ENCODE measurements at regions of chr10 and their contacts with region 1.

Region 1: DNA sequence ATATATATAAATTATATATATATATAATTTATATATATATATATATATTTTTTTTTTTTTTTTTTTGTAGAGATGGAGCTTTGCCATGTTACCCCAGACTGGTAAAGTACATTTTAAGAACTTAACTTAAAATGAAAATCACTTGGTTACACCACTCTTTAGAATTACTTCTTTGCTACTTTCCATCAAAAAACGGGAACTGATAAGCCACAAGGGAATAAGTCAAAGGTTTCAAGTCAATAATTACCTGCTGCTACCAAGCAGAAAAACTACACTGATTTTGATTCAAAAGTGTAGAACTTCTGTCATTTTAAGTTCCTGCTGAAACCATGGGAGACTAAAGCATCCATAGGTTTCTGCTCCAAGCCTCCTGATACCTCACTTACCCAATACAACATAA is 12.2 kb downstream of the PPA1 start:
- DNase-seq: no peak
- ATAC-seq: no peak
- H3K4me3 ChIP-seq: no peak overlapping the region
- H3K4me3 Mint-ChIP-seq: peak overlapping the region in 1 of 3 donors; percentile 56
- H3K27ac ChIP-seq: peak overlapping the region; percentile 6
- H3K27ac Mint-ChIP-seq: peak overlapping the region; percentile 83 to 85
- H3K4me1 ChIP-seq: peaks cover 3 to 6% of the 10 kb centered on the region in 2 experiments
- H3K4me1 Mint-ChIP-seq: peaks cover 14 to 18% (median 16%) of the 10 kb centered on the region in 3 donors
- H3K27me3 ChIP-seq: no peaks in the 10 kb centered on the region
- H3K27me3 Mint-ChIP-seq: no peaks in the 10 kb centered on the region

Region 2: DNA sequence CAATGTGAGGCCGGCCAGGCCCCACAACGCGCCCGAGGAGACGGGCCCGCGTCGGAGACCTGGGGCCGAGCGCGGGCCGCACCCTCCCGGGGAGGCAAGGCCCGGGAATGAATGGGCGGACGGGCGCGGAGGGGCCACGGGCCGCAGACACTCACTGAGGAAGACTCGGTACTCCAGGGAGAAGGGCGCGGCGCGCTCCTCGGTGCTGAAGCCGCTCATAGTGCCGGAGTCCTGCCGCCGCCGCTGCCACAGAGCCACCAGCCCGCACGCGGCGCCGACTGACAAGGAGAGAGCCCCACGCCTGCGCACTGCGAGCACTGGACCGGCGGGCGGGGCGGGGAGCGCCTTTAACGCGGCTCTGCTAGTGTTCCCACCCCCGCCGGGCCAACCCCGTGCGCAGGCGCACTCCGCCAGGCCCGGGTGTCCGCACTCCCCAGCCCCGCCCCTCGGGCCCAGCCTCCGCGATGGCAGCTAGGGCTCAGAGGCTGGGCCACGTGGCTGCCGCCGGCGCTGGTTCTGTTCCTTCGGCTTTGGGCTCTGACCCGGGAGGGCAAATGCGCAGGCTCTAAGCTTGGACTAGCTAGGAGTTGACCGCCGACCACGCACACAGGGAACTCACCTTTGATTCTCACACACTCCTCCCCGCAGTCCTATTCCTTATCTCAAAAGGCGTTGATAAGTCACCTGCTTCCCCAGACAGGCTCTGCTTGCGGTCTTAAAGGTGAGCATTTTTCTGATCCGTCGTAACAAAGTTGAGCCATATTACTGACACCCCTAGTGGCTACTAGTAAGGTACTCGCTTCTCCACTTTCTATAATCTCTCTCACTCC is 12.3 kb after region 1 on chr10 and contains the start of gene PPA1:
- CTCF ChIA-PET with region 1: interaction called, 4 to 45 read pairs
- POLR2A ChIA-PET with region 1: interaction called, 3 to 4 read pairs
- DNase-seq: peak; percentile 97 to 100 (median 99)
- ATAC-seq: peak; percentile 91 to 98 (median 92)
- H3K4me3 ChIP-seq: peak within 1 kb of the TSS; percentile 88
- H3K4me3 Mint-ChIP-seq: peak within 1 kb of the TSS; percentile 78 to 92 (median 83)
- H3K27ac ChIP-seq: peak within 1 kb of the TSS; percentile 80
- H3K27ac Mint-ChIP-seq: peak within 1 kb of the TSS; percentile 77 to 92
- H3K4me1 ChIP-seq: peaks cover 6 to 18% of the 10 kb centered on the region in 2 experiments
- H3K4me1 Mint-ChIP-seq: peaks cover 19 to 37% (median 30%) of the 10 kb centered on the region in 3 donors
- H3K27me3 ChIP-seq: no peaks in the 10 kb centered on the region
- H3K27me3 Mint-ChIP-seq: no peaks in the 10 kb centered on the region
- total RNA-seq, gene PPA1: 56.7 to 78.4 (median 64.4) TPM

Region 3: GRCh38 chr10:70272925-70273316 is 51.9 kb after region 1 on chr10:
- CTCF ChIA-PET with region 1: interaction called, 7 to 16 read pairs
- POLR2A ChIA-PET with region 1: no interaction called
- DNase-seq: peak in 2 of 35 experiments; percentile 7 to 60
- ATAC-seq: peak; percentile 33 to 68 (median 58)
- H3K4me3 ChIP-seq: no peak overlapping the region
- H3K4me3 Mint-ChIP-seq: no peak overlapping the region
- H3K27ac ChIP-seq: peak overlapping the region; percentile 12
- H3K27ac Mint-ChIP-seq: no peak overlapping the region
- H3K4me1 ChIP-seq: peaks cover 0 to 4% of the 10 kb centered on the region in 2 experiments
- H3K4me1 Mint-ChIP-seq: peaks cover 6 to 11% (median 10%) of the 10 kb centered on the region in 3 donors
- H3K27me3 ChIP-seq: peaks cover 0 to 3% of the 10 kb centered on the region in 2 experiments
- H3K27me3 Mint-ChIP-seq: no peaks in the 10 kb centered on the region

Region 4: GRCh38 chr10:70358446-70358845 is 137.4 kb after region 1 on chr10:
- CTCF ChIA-PET with region 1: interaction called, 39 to 177 read pairs
- POLR2A ChIA-PET with region 1: interaction called, 4 to 11 read pairs
- DNase-seq: no peak
- ATAC-seq: no peak
- H3K4me3 ChIP-seq: no peak overlapping the region
- H3K4me3 Mint-ChIP-seq: no peak overlapping the region
- H3K27ac ChIP-seq: no peak overlapping the region
- H3K27ac Mint-ChIP-seq: no peak overlapping the region
- H3K4me1 ChIP-seq: peaks cover 2 to 21% of the 10 kb centered on the region in 2 experiments
- H3K4me1 Mint-ChIP-seq: peaks cover 7 to 15% (median 7%) of the 10 kb centered on the region in 3 donors
- H3K27me3 ChIP-seq: peaks cover 0 to 4% of the 10 kb centered on the region in 2 experiments
- H3K27me3 Mint-ChIP-seq: peaks cover 0 to 7% of the 10 kb centered on the region in 2 donors

Region 5: GRCh38 chr10:70363971-70364771 is 143.1 kb after region 1 on chr10:
- CTCF ChIA-PET with region 1: interaction called, 39 to 177 read pairs
- POLR2A ChIA-PET with region 1: interaction called, 5 to 11 read pairs
- DNase-seq: peak; percentile 44 to 91 (median 78)
- ATAC-seq: peak; percentile 96 to 100 (median 98)
- H3K4me3 ChIP-seq: no peak overlapping the region
- H3K4me3 Mint-ChIP-seq: peak overlapping the region in 1 of 3 donors; percentile 3
- H3K27ac ChIP-seq: no peak overlapping the region
- H3K27ac Mint-ChIP-seq: peak overlapping the region in 1 of 2 donors; percentile 39
- H3K4me1 ChIP-seq: peaks cover 0 to 14% of the 10 kb centered on the region in 2 experiments
- H3K4me1 Mint-ChIP-seq: peaks cover 9 to 17% (median 12%) of the 10 kb centered on the region in 3 donors
- H3K27me3 ChIP-seq: no peaks in the 10 kb centered on the region
- H3K27me3 Mint-ChIP-seq: no peaks in the 10 kb centered on the region

Region 6: DNA sequence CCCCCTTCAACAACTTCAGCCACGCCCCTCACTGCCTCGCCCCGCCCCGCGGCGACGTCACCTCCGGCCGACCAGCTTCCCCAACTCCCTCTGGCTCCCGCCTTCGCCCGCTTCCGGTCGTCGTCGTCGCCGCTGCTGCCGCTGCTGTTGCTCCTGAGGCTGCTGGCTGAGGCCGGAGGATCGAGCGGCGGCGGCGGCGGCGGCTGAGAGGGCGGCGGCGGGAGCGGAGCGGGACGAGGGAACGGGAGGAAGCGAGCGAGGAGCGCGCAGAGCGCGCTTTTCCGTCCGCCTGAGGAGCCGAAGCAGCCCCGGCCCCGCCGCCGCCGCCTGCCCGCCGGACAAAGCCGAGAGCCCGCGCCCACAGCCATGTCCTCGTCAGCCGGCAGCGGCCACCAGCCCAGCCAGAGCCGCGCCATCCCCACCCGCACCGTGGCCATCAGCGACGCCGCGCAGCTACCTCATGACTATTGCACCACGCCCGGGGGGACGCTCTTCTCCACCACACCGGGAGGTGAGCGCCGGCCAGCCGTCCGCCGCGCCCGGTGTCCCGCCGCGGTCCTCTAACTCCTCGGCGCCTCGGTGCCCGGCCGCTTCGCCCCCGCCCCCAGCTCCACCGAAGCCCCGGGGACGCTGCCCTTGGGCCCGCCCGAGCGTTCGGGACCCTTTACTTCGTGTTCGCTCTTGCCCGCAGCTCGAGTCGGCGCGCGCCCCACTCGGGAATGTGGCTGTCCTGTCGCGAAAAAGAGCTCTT is 183.2 kb after region 1 on chr10 and contains the start of gene EIF4EBP2:
- CTCF ChIA-PET with region 1: interaction called in 1 of 2 experiments, 11 read pairs
- POLR2A ChIA-PET with region 1: interaction called in 1 of 2 experiments, 4 read pairs
- DNase-seq: peak; percentile 89 to 100 (median 97)
- ATAC-seq: peak; percentile 92 to 96 (median 96)
- H3K4me3 ChIP-seq: peak within 1 kb of the TSS; percentile 63 to 69
- H3K4me3 Mint-ChIP-seq: peak within 1 kb of the TSS; percentile 95 to 100 (median 96)
- H3K27ac ChIP-seq: peak within 1 kb of the TSS; percentile 55
- H3K27ac Mint-ChIP-seq: peak within 1 kb of the TSS; percentile 91 to 92
- H3K4me1 ChIP-seq: peaks cover 11 to 30% of the 10 kb centered on the region in 2 experiments
- H3K4me1 Mint-ChIP-seq: peaks cover 41 to 54% (median 50%) of the 10 kb centered on the region in 3 donors
- H3K27me3 ChIP-seq: no peaks in the 10 kb centered on the region
- H3K27me3 Mint-ChIP-seq: no peaks in the 10 kb centered on the region
- total RNA-seq, gene EIF4EBP2: 39.9 to 47.7 (median 42.6) TPM

Region 7: DNA sequence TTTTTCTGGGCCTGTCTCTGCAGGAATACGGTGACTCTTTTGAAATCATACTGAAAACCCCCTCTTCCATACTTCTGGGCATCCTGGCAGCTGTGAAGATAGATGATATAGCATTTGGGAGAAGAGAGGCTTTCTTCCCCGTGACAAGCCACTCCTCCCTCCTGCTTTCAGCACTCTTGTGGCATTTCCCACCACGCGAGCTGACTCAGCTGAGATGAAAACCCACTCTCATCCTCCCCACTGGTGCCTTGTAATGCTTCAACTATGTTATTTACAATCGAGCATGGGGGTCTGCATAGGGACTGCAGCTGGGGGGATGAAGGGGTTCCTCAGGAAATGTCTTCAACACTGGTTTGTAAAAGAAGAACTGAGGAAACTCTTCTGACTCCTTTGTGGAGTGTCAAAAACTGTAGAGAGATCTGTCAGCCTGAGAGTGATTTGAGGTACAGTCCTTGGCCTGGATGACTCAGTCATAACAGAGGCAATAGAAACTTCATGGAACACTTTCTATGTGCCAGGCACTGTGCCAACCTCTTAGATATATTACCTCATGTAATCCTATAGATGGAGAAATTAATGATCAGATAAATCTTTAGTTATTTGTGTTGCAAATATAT is 565.9 kb after region 1 on chr10:
- CTCF ChIA-PET with region 1: no interaction called
- POLR2A ChIA-PET with region 1: no interaction called
- DNase-seq: no peak
- ATAC-seq: no peak
- H3K4me3 ChIP-seq: no peak overlapping the region
- H3K4me3 Mint-ChIP-seq: no peak overlapping the region
- H3K27ac ChIP-seq: no peak overlapping the region
- H3K27ac Mint-ChIP-seq: no peak overlapping the region
- H3K4me1 ChIP-seq: peaks cover 2 to 10% of the 10 kb centered on the region in 2 experiments
- H3K4me1 Mint-ChIP-seq: peaks cover 0 to 21% (median 7%) of the 10 kb centered on the region in 3 donors
- H3K27me3 ChIP-seq: peaks cover 0 to 12% of the 10 kb centered on the region in 2 experiments
- H3K27me3 Mint-ChIP-seq: peaks cover 5% of the 10 kb centered on the region in 2 donors